Naive thymus-derived CD4-positive, alpha-beta T cell (primary cell): ENCODE measurements at regions of chr22 and their contacts with region 1.

Region 1: GRCh38 chr22:36350751-36351594 is 36.8 kb downstream of the MYH9 start:
- DNase-seq: no peak
- ATAC-seq: peak; percentile 43
- H3K4me3 ChIP-seq: no peak overlapping the region
- H3K4me3 Mint-ChIP-seq: peak overlapping the region in 8 of 10 donors; percentile 56 to 88 (median 74)
- H3K27ac ChIP-seq: peak overlapping the region; percentile 63
- H3K27ac Mint-ChIP-seq: peak overlapping the region; percentile 86 to 98 (median 95)
- H3K4me1 ChIP-seq: peaks cover 74 to 81% of the 10 kb centered on the region in 2 donors
- H3K4me1 Mint-ChIP-seq: peaks cover 67 to 97% (median 87%) of the 10 kb centered on the region in 7 donors
- H3K27me3 ChIP-seq: no peaks in the 10 kb centered on the region
- H3K27me3 Mint-ChIP-seq: no peaks in the 10 kb centered on the region

Region 2: GRCh38 chr22:36211237-36211861 is 139.6 kb before region 1 on chr22:
- CTCF ChIA-PET with region 1: no interaction called
- POLR2A ChIA-PET with region 1: no interaction called
- intact Hi-C with region 1: no loop called
- DNase-seq: no peak
- ATAC-seq: peak; percentile 32
- H3K4me3 ChIP-seq: no peak overlapping the region
- H3K4me3 Mint-ChIP-seq: no peak overlapping the region
- H3K27ac ChIP-seq: no peak overlapping the region
- H3K27ac Mint-ChIP-seq: no peak overlapping the region
- H3K4me1 ChIP-seq: no peaks in the 10 kb centered on the region
- H3K4me1 Mint-ChIP-seq: peaks cover 5 to 16% (median 8%) of the 10 kb centered on the region in 7 donors
- H3K27me3 ChIP-seq: no peaks in the 10 kb centered on the region
- H3K27me3 Mint-ChIP-seq: peaks cover 5 to 70% (median 31%) of the 10 kb centered on the region in 5 donors

Region 3: DNA sequence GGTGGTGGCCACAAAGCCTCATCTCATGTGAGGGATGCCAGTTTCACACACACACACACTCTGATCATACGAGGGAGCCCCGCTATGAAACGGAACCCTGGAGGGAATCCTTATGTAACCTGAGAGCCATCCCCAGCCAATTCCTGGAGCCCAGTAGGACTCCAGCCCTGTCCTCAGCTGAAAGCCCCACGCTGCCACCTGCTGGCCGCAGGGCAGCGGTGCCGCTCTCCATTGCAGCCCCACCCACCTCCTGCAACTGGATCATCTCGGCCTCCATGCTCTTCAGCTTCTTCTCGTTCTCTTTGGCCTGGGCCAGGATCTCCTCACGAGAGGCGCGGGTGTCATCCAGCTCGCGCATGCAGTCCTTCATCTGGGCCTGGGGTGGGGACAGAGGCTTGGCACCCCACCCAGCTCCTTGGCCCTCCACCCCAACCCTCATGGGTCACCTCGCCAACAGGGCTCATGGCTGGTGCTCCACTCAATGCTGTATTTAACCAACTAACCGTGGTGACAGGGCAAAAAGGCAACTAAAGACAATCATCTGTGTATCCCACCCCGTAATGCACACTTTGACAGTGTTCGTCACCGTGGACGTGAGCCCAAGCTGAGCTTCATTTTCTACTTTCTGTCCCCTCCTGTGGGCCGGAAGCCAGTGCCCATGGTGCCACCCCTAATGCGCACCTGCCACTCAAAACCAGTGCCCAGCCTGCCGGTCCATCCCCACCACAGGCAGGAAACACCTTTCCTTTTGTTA is 64.3 kb before region 1 on chr22:
- CTCF ChIA-PET with region 1: no interaction called
- POLR2A ChIA-PET with region 1: no interaction called
- intact Hi-C with region 1: no loop called
- DNase-seq: peak; percentile 47 to 73 (median 60)
- ATAC-seq: peak; percentile 80
- H3K4me3 ChIP-seq: no peak overlapping the region
- H3K4me3 Mint-ChIP-seq: peak overlapping the region in 6 of 10 donors; percentile 19 to 50 (median 44)
- H3K27ac ChIP-seq: peak overlapping the region; percentile 43
- H3K27ac Mint-ChIP-seq: peak overlapping the region; percentile 69 to 97 (median 84)
- H3K4me1 ChIP-seq: peaks cover 32 to 34% of the 10 kb centered on the region in 2 donors
- H3K4me1 Mint-ChIP-seq: peaks cover 20 to 44% (median 29%) of the 10 kb centered on the region in 7 donors
- H3K27me3 ChIP-seq: no peaks in the 10 kb centered on the region
- H3K27me3 Mint-ChIP-seq: no peaks in the 10 kb centered on the region

Region 4: DNA sequence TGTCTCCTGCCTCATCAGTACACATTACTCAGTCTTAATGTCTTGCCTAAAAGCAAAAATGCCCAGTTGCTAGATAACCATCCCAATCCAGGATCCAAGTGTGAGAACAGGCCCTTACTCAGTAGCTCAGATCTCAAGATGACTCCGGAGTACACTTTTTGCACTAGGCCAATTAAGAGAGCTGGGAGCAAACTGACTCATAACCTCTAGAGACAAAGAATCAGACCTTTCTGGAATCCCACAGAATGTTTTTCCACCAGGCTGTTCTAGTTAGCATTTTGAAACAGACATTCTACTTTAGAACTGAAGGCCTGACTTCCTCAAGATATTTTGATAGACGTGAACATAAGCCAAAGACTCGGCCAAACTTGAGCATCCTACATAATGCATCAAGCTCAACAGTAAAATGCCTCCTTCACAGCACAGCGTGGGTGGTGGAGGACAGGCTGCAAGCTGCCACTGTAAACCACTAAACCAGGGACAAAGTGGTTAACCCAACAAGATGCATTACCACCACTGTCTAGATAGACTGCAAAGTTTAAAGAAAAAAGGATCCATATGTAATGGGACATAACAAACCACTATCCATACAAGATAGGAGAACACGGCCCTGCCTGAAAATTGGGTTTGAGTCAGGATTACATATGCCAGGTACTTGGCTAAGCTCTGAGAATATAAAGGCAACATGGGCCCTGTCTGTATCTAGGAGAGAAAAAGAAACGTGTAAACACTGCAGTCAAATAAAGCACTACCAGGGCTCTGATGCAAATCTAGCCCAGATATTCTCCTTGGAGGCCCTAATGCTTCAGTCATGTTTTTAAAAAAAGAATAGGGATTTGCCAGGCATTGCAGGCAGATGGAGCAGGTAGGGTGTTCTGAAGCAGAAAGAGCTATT is 11.6 kb before region 1 on chr22:
- CTCF ChIA-PET with region 1: interaction called, 5 read pairs
- POLR2A ChIA-PET with region 1: interaction called, 1,512 read pairs
- intact Hi-C with region 1: no loop called
- DNase-seq: peak in 1 of 9 donors; percentile 50
- ATAC-seq: no peak
- H3K4me3 ChIP-seq: peak overlapping the region; percentile 9
- H3K4me3 Mint-ChIP-seq: peak overlapping the region; percentile 37 to 92 (median 62)
- H3K27ac ChIP-seq: peak overlapping the region; percentile 64
- H3K27ac Mint-ChIP-seq: peak overlapping the region; percentile 84 to 100 (median 96)
- H3K4me1 ChIP-seq: peaks cover 88 to 97% of the 10 kb centered on the region in 2 donors
- H3K4me1 Mint-ChIP-seq: peaks cover 66 to 98% (median 88%) of the 10 kb centered on the region in 7 donors
- H3K27me3 ChIP-seq: no peaks in the 10 kb centered on the region
- H3K27me3 Mint-ChIP-seq: no peaks in the 10 kb centered on the region